Posterior cingulate gyrus (tissue), 11 donors: ENCODE measurements at regions of chr1 and their contacts with region 1.

Region 1: GRCh38 chr1:210850556-210850955 is 283.4 kb downstream of the KCNH1 start:
- DNase-seq: peak; percentile 44 to 95 (median 68)

Region 2: DNA sequence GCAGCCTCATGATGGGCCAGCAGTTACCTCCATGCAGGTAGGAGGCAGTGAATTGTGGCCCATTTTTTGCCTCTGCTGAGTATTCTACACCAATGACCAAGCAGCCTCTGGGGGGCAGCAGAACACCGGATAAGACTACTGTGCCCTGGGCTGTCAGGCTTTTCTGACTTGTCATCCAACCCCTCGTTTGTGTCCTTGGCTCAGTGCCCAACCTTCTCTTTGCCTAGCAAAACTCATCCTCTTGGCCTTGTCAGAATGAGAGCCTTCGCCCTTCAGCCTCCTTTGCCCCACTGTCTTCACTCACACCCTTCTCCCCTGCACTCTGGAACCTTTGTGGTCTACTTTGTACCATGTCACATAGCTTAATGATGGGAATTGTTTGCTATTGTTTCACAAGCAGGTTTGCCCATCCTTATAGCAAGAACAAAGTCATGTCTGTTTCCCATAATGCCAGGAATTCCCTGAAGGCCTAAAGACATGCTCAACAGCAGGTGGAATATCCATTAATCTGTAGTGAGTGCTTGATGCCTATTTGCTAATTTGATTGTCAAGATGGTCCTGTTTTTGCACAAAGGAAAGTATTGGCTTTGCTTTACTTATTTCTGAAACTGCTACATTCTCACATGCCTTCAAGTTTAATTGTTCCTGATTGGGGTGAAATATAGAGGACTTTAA is 266.0 kb before region 1 on chr1:
- intact Hi-C with region 1: loop called (anchors 5 kb)
- DNase-seq: peak; percentile 77 to 98 (median 93)

Region 3: DNA sequence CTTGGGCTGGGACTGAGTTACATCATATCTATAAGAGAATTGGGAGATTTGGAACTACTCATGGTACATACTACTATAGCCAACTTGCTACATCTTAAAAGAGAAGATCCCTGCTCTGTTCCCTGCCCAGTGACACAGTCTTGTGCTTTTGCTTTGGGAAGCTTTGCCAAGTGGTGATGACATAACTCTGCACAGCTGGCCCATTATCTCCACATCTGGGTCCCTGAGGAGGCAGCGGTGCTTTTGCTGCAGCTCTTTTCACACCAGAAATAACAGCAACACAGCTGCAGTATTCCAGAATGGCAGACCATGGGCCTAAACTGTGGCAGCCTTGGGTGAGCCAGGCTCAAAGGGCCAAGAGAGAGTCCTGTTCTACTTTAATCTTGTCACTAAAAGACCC is 225.8 kb before region 1 on chr1:
- intact Hi-C with region 1: loop called (anchors 5 kb)
- DNase-seq: peak in 7 of 10 donors; percentile 26 to 90 (median 40)